K562 (cell line): ENCODE measurements at regions of chrX and their contacts with region 1.

Region 1: DNA sequence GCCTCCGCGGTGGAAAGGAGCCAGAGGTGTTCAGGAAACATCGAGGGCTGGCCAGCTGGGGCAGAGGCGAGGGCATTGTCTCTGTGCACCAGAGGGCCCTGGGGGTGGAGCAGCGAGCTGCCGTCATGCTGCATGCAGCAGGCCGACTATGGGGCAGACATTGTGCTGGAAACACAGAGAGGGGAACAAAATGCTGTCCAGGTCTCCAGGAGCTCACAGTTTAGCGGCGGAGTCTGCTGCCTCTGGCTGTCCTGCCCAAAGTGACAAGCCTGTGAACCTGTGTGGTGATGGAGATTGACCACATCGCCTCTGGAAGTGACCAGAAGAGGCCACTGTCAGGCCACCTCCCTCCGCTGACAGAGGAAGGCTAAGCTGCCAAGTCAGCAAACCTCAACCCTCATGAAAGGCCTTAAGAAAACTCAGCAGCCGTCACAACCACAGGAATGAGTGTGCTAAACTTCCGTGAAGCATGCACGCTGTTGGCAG is 20.1 kb upstream of the SASH3 start:
- DNase-seq: peak in 3 of 4 experiments; percentile 18 to 62 (median 38)
- ATAC-seq: peak; percentile 87
- H3K4me3 ChIP-seq: no peak overlapping the region
- H3K27ac ChIP-seq: peak overlapping the region; percentile 30; the same call in 1 of the 3 replicates
- H3K4me1 ChIP-seq: peaks cover 12 to 17% of the 10 kb centered on the region in 2 experiments; a peak in 4 of 5 replicates
- H3K27me3 ChIP-seq: no peaks in the 10 kb centered on the region
- CTCF ChIP-seq: peak; percentile 34 to 51 (median 41); a peak in 5 of 6 replicates
- EP300 ChIP-seq: no peak
- POLR2A ChIP-seq: no peak
- RAD21 ChIP-seq: peak; percentile 61; a peak in 3 of 4 replicates

Region 2: DNA sequence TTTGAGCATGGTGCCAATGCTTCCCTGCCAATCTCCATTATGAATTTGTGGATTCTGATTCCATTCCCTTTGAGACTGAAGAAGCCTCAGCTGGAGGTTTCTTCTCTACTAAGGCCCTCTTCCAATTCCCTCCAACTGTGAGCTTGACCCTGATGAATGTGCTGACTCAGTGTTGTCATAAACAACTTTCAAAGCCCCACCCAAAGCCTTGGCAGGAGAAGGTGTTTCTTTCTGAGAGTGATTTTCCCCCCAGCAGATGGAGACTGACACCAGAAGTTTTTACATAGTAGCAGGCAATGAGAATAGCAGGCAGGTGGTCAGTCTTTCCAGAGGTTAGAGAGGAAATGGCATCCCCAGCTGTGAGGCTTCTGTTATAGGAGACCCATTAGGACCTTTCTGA is 166.5 kb before region 1 on chrX:
- CTCF ChIA-PET with region 1: no interaction called
- POLR2A ChIA-PET with region 1: no interaction called
- in situ Hi-C with region 1: no loop called
- intact Hi-C with region 1: no loop called
- DNase-seq: peak; percentile 32 to 62 (median 36)
- ATAC-seq: peak; percentile 93
- H3K4me3 ChIP-seq: no peak overlapping the region
- H3K27ac ChIP-seq: peak overlapping the region; percentile 44
- H3K4me1 ChIP-seq: peaks cover 0 to 21% of the 10 kb centered on the region in 2 experiments; a peak in 4 of 5 replicates
- H3K27me3 ChIP-seq: no peaks in the 10 kb centered on the region
- CTCF ChIP-seq: peak in 2 of 3 experiments; percentile 7 to 28; a peak in 2 of 6 replicates
- EP300 ChIP-seq: peak; percentile 26; the same call in 1 of the 2 replicates
- POLR2A ChIP-seq: no peak
- RAD21 ChIP-seq: no peak

Region 3: GRCh38 chrX:129823115-129823514 is 63.5 kb after region 1 on chrX:
- CTCF ChIA-PET with region 1: no interaction called
- POLR2A ChIA-PET with region 1: no interaction called
- in situ Hi-C with region 1: no loop called
- intact Hi-C with region 1: loop called (anchors 2 kb)
- DNase-seq: peak; percentile 48 to 63 (median 50)
- ATAC-seq: peak; percentile 88
- H3K4me3 ChIP-seq: no peak overlapping the region
- H3K27ac ChIP-seq: no peak overlapping the region
- H3K4me1 ChIP-seq: 0 out of 5 replicates have a peak, but pooled peaks cover 0 to 2% of the 10 kb centered on the region in 2 experiments
- H3K27me3 ChIP-seq: no peaks in the 10 kb centered on the region
- CTCF ChIP-seq: peak; percentile 55 to 64 (median 58)
- EP300 ChIP-seq: no peak
- POLR2A ChIP-seq: no peak
- RAD21 ChIP-seq: peak; percentile 64

Region 4: GRCh38 chrX:129905787-129906580 is 146.4 kb after region 1 on chrX and contains the start of gene UTP14A:
- CTCF ChIA-PET with region 1: no interaction called
- POLR2A ChIA-PET with region 1: no interaction called
- in situ Hi-C with region 1: no loop called
- intact Hi-C with region 1: loop called (anchors 10 kb)
- DNase-seq: peak; percentile 86 to 96 (median 89)
- ATAC-seq: peak; percentile 99
- H3K4me3 ChIP-seq: peak within 1 kb of the TSS; percentile 94
- H3K27ac ChIP-seq: peak within 1 kb of the TSS; percentile 89
- H3K4me1 ChIP-seq: peaks cover 0 to 6% of the 10 kb centered on the region in 2 experiments; a peak in 3 of 5 replicates
- H3K27me3 ChIP-seq: no peaks in the 10 kb centered on the region
- CTCF ChIP-seq: no peak
- EP300 ChIP-seq: 0 out of 2 replicates have a peak, but pooled peaks have one; percentile 13
- POLR2A ChIP-seq: peak; percentile 92
- RAD21 ChIP-seq: no peak
- polyA plus RNA-seq, gene UTP14A: 30.5 to 59.9 TPM